ENCODE measurements at regions of chr10 and their contacts with region 1.

Region 1: DNA sequence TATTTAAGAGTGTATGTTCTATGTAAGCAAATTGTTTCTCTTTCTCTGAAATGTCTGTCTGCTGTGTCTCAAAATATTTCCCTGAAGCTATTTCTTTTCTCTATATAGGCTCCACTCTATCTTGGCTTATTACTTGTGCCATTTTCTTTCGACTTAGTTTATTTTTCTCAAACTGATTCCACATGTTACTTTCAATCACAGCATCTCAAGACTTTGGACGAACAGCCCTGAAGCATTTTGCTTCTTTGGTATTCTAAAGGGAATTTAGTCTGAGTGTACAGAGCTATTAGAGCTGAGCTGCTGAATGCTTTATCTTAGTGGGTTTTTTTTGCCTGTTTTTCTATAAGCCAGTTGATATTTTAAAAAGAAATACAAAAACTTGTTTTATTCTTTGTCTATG is 95.7 kb downstream of the PLXDC2 start:
- DNase-seq: no peak
- ATAC-seq: no peak
- H3K4me3 ChIP-seq: no peak overlapping the region
- H3K27ac ChIP-seq: no peak overlapping the region
- H3K4me1 ChIP-seq: no peaks in the 10 kb centered on the region
- H3K27me3 ChIP-seq: no peaks in the 10 kb centered on the region
- CTCF ChIP-seq: no peak
- EP300 ChIP-seq: no peak
- POLR2A ChIP-seq: no peak
- RAD21 ChIP-seq: no peak

Region 2: GRCh38 chr10:19699298-19699697 is 212.6 kb before region 1 on chr10:
- CTCF ChIA-PET with region 1: no interaction called
- POLR2A ChIA-PET with region 1: no interaction called
- RAD21 ChIA-PET with region 1: no interaction called
- SMC1A ChIA-PET with region 1: no interaction called
- in situ Hi-C with region 1: no loop called
- intact Hi-C with region 1: no loop called
- DNase-seq: no peak
- ATAC-seq: no peak
- H3K4me3 ChIP-seq: no peak overlapping the region
- H3K27ac ChIP-seq: no peak overlapping the region
- H3K4me1 ChIP-seq: no peaks in the 10 kb centered on the region
- H3K27me3 ChIP-seq: no peaks in the 10 kb centered on the region
- CTCF ChIP-seq: no peak
- EP300 ChIP-seq: no peak
- POLR2A ChIP-seq: no peak
- RAD21 ChIP-seq: no peak

Region 3: GRCh38 chr10:19922236-19922963 is 10.5 kb after region 1 on chr10:
- CTCF ChIA-PET with region 1: interaction called, 4 read pairs
- POLR2A ChIA-PET with region 1: no interaction called
- RAD21 ChIA-PET with region 1: no interaction called
- SMC1A ChIA-PET with region 1: interaction called, 12 read pairs
- in situ Hi-C with region 1: no loop called
- intact Hi-C with region 1: no loop called
- DNase-seq: no peak
- ATAC-seq: peak; percentile 57
- H3K4me3 ChIP-seq: no peak overlapping the region
- H3K27ac ChIP-seq: no peak overlapping the region
- H3K4me1 ChIP-seq: no peaks in the 10 kb centered on the region
- H3K27me3 ChIP-seq: no peaks in the 10 kb centered on the region
- CTCF ChIP-seq: no peak
- EP300 ChIP-seq: no peak
- POLR2A ChIP-seq: no peak
- RAD21 ChIP-seq: no peak

Measured in GM12878 (cell line).